Endothelial cell of umbilical vein (primary cell): ENCODE measurements at regions of chr14 and their contacts with region 1.

Region 1: GRCh38 chr14:21557084-21557901 is 22.6 kb downstream of the OR10G3 start:
- DNase-seq: peak; percentile 88
- H3K4me3 ChIP-seq: peak overlapping the region in 2 of 3 experiments; percentile 25 to 30
- H3K27ac ChIP-seq: no peak overlapping the region
- H3K4me1 ChIP-seq: peaks cover 5% of the 10 kb centered on the region
- H3K27me3 ChIP-seq: no peaks in the 10 kb centered on the region
- CTCF ChIP-seq: peak; percentile 35 to 58
- POLR2A ChIP-seq: no peak

Region 2: DNA sequence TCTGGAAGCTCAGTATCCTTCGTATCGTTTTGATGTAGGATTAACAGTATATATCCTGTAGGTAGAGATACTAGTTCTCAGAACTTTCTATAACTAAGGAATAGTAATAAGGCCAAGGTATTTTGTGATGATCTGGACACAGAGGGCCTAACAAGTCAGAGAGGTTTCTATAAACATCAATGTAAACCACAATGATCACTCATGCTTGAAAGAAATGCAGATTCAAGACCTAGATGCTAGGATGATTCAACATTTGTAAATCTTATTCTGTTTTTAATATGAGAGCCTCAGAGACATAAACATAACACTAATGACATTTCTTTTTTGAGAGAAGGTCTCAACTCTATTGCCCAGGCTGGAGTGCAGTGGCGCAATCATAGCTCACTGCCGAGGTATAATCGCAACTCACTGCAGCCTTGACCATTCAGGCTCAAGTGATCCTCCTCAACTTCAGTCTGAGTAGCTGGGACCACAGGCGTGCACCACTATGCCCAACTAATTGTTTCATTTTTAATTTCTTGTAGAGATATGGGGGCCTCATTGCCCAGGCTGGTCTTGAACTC is 189.6 kb before region 1 on chr14:
- CTCF ChIA-PET with region 1: no interaction called
- POLR2A ChIA-PET with region 1: no interaction called
- dilution Hi-C with region 1: no loop called
- intact Hi-C with region 1: loop called (anchors 5 kb)
- DNase-seq: no peak
- H3K4me3 ChIP-seq: no peak overlapping the region
- H3K27ac ChIP-seq: no peak overlapping the region
- H3K4me1 ChIP-seq: no peaks in the 10 kb centered on the region
- H3K27me3 ChIP-seq: no peaks in the 10 kb centered on the region
- CTCF ChIP-seq: no peak
- POLR2A ChIP-seq: no peak

Region 3: DNA sequence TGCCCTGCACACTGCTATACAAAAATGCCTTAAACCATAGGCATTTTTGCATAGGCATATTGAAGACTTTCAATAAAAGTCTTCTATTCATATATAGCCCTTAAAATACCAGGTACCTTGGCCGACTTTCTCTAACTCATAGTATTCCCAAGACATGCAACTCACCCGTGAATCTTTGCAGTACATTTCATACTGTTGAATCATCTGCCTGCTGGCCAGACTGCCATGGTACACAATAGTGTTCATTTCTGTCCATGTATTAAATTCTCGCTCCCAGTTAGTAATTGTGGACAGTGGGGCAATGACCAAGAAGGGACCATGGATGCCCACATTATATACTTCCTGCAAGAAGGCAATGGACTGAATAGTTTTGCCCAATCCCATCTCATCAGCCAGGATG is 149.1 kb before region 1 on chr14:
- CTCF ChIA-PET with region 1: interaction called, 5 read pairs
- POLR2A ChIA-PET with region 1: no interaction called
- dilution Hi-C with region 1: no loop called
- intact Hi-C with region 1: loop called (anchors 5 kb)
- DNase-seq: no peak
- H3K4me3 ChIP-seq: no peak overlapping the region
- H3K27ac ChIP-seq: no peak overlapping the region
- H3K4me1 ChIP-seq: peaks cover 13% of the 10 kb centered on the region
- H3K27me3 ChIP-seq: no peaks in the 10 kb centered on the region
- CTCF ChIP-seq: no peak
- POLR2A ChIP-seq: no peak